ENCODE measurements at regions of chr16 and their contacts with region 1.

Region 1: DNA sequence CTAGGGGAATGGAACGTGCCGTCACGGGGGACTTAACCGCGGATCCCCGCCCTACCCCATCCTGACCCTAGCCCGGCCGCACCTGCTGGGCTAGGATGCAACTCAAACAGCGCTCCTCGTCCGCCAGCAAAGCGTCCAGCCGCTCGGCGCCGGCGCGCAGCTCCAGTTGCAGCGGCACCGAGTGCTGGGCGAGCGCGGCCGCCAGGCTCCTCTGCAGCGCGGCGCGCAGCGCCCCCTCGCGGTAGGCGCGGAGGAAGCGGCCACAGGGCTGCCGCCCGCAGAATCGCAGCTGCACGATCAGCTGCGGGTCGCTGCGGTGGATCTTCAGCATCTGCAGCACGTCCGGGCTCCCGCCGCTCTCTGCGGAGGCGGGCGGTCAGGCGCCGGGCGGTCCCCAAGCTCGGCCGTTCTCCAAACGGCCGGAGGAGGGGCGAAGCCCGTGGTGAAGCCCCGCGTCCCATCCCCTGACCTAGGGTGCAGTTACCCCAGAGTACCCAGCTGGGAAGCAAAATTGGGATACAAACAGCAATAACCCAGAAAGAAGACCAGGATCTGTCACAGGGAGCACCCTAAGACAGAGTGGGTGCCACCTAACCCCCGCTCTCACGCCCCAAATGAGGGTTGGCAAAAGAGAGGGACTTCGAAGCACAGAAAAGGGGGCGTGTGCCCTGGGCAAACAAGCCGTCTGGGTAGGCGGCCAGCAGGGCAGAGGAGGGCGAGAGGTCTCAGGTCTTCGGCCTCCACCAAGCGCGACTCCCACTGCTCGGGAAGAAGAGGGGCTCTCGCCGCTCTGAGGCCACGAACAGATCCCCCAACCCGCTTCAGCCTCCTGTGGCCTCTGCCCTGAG is 4.2 kb downstream of the TRADD start:
- DNase-seq: peak in 1 of 2 donors; percentile 67
- H3K4me3 ChIP-seq: peak overlapping the region in 2 of 3 donors; percentile 15 to 57
- H3K27ac ChIP-seq: no peak overlapping the region
- H3K4me1 ChIP-seq: peaks cover 0 to 4% of the 10 kb centered on the region in 2 donors
- H3K27me3 ChIP-seq: no peaks in the 10 kb centered on the region
- CTCF ChIP-seq: peak; percentile 63 to 99 (median 90)
- POLR2A ChIP-seq: no peak

Region 2: GRCh38 chr16:67181346-67181745 is 25.8 kb after region 1 on chr16:
- intact Hi-C with region 1: loop called (anchors 1 kb)
- DNase-seq: no peak
- H3K4me3 ChIP-seq: no peak overlapping the region
- H3K27ac ChIP-seq: peak overlapping the region in 1 of 2 donors; percentile 82
- H3K4me1 ChIP-seq: peaks cover 7 to 14% of the 10 kb centered on the region in 2 donors
- H3K27me3 ChIP-seq: no peaks in the 10 kb centered on the region
- CTCF ChIP-seq: no peak
- POLR2A ChIP-seq: no peak

Region 3: DNA sequence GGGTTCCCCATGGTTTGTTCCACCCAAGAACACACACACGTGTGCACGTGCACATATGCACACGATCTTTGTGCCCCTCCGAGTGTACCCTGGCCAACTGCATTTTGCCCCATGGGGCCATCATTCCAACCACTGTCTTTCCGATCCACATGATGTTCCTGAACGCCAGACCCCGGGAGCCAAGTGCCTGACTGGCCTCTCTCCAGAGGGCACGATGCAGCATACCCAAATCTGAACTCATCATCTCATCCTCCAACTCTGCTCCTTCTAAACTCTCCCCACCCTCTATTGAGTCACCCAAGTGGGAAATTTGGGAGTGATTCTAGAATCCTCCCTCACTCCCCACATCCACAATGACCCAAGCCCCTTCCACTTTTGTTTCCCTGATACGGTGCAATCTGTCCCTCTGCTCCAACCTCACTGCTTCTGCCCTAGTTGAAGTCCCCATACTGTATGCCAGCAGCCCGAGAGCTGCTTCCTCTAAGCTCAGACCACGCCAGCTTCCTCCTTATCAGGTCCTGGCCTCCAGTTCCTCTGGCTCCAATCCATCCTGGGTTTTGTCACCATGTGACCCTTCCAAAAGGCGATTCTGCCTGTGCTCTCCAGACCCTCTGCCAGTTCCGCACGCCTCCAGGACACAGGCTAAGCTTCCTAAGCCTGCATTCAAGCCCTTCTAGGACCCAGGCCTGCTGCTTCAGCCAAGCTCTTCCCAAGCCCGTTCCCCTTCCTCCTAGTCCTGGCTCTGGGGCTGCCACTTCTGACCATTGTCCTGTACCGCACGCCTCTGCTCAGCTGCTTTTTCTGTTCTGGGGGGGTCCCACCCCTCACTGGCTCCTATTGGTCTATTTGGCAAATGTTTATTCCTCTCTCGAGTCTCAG is 61.3 kb after region 1 on chr16:
- intact Hi-C with region 1: no loop called
- DNase-seq: no peak
- H3K4me3 ChIP-seq: no peak overlapping the region
- H3K27ac ChIP-seq: no peak overlapping the region
- H3K4me1 ChIP-seq: no peaks in the 10 kb centered on the region
- H3K27me3 ChIP-seq: no peaks in the 10 kb centered on the region
- CTCF ChIP-seq: no peak
- POLR2A ChIP-seq: no peak

Region 4: GRCh38 chr16:67428146-67428731 is 272.7 kb after region 1 on chr16:
- intact Hi-C with region 1: no loop called
- DNase-seq: peak; percentile 70 to 83
- H3K4me3 ChIP-seq: no peak overlapping the region
- H3K27ac ChIP-seq: peak overlapping the region; percentile 81 to 88
- H3K4me1 ChIP-seq: peaks cover 4 to 14% of the 10 kb centered on the region in 2 donors
- H3K27me3 ChIP-seq: no peaks in the 10 kb centered on the region
- CTCF ChIP-seq: peak in 2 of 3 donors; percentile 91 to 92
- POLR2A ChIP-seq: no peak

Measured in breast epithelium (tissue), 4 donors.